ENCODE measurements at regions of chr3 and their contacts with region 1.

Region 1: DNA sequence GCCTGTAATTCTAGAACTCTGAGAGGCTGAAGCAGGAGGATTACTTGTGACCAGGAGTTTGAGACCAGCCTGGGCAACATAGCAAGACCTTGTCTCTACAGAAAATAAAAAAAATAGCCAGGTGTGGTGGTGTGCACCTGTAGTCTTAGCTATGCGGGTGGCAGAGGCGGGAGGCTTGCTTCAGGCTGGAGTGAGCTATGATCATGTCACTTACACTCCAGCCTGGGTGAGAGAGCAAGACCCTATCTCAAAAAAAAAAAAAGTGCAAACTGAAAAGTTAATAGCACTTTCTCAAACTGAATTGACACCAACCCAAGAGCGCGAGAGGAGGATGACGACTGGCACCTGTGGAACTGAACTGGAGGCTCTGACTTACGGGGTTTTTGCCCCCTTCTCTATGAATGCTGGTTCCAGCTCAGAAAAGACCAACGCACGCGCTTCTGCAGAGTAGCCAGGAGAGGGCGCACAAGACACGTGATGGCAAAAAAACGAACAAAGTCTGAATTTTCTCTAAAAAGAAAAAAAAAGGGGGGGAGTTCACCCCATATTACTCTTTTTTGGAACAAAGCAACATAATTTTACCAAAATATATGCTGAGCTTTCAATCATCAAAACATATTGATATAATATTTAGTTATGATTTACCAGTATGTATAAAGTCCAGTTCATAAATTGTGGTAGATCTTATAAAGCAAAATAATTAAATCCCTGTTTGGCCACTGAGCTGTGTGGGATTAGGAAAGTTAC is 23.7 kb downstream of the CFAP92 start:
- DNase-seq: peak; percentile 40
- H3K4me3 Mint-ChIP-seq: no peak overlapping the region
- H3K27ac Mint-ChIP-seq: no peak overlapping the region
- H3K4me1 Mint-ChIP-seq: peaks cover 3% of the 10 kb centered on the region
- H3K27me3 Mint-ChIP-seq: peaks cover 8% of the 10 kb centered on the region

Region 2: GRCh38 chr3:128794770-128795649 is 175.2 kb before region 1 on chr3:
- intact Hi-C with region 1: no loop called
- DNase-seq: peak; percentile 61
- H3K4me3 Mint-ChIP-seq: peak overlapping the region; percentile 49
- H3K27ac Mint-ChIP-seq: peak overlapping the region; percentile 93
- H3K4me1 Mint-ChIP-seq: peaks cover 63% of the 10 kb centered on the region
- H3K27me3 Mint-ChIP-seq: no peaks in the 10 kb centered on the region

Region 3: DNA sequence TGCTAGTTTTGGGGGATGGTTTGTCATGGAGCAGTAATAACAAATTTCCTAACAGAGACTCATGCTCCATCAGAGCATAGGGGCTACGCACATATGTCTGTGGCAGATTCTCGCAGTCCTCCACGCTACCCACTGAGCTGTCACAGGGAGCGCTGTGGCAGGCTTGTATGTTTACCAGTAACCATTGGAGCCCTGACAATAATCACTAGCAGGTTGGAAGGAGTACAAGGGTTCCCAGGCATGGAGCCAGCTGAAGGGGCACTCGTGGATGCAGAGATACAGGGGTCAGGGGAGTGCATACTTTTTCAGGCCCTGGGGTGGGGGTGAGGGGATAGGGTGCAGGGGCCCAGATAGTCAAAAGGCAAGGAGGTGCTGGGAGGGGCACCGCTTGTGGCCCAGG is 82.5 kb after region 1 on chr3:
- intact Hi-C with region 1: loop called (anchors 2 kb)
- DNase-seq: no peak
- H3K4me3 Mint-ChIP-seq: no peak overlapping the region
- H3K27ac Mint-ChIP-seq: no peak overlapping the region
- H3K4me1 Mint-ChIP-seq: peaks cover 6% of the 10 kb centered on the region
- H3K27me3 Mint-ChIP-seq: peaks cover 11% of the 10 kb centered on the region

Region 4: DNA sequence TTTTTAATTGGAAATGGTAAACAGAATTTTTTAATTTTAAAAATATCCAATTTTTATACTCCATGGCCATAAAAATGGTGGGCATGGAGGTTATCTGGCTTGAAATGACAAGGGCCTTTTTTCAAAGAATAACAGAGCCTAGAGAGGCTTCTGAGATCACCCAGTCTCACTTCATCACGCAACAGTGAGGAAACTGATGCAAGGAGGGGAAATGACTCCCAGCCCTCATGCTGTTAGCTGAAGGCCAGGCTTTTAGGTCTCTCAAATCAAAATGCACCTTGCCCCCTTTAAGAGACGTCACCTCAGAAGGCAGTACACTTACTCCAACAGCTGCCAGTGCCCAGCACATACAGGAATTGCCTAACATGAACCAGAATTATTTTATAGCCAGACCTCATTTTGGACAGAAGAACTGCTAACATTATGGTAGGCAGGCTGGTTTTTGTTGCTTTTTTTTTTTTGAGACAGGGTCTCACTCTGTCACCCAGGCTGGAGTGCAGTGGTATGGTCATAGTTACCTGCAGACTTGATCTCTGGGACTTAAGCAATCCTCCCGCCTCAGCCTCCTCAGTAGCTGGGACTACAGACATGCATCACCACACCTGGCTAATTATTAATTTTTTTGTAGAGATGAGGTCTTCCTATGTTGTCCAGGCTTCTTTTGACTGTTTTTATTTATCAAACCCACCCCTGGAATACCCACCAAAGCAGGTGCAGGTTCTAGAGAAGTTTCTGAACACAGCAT is 142.3 kb after region 1 on chr3:
- intact Hi-C with region 1: no loop called
- DNase-seq: no peak
- H3K4me3 Mint-ChIP-seq: peak overlapping the region; percentile 4
- H3K27ac Mint-ChIP-seq: peak overlapping the region; percentile 89
- H3K4me1 Mint-ChIP-seq: peaks cover 60% of the 10 kb centered on the region
- H3K27me3 Mint-ChIP-seq: no peaks in the 10 kb centered on the region

Measured in activated T-helper 2 cell treated with anti-CD3 and anti-CD28 coated beads, Interferon-gamma antibody, Interleukin-2, Interleukin-4, amounts not matched to agents 10 μg/mL and 5 μg/mL and 100 μg/mL, durations not matched to agents 14 hours and 24 hours and 36 hours (primary cell).